Esophagus muscularis mucosa (tissue), 4 donors: ENCODE measurements at regions of chr2 and their contacts with region 1.

Region 1: DNA sequence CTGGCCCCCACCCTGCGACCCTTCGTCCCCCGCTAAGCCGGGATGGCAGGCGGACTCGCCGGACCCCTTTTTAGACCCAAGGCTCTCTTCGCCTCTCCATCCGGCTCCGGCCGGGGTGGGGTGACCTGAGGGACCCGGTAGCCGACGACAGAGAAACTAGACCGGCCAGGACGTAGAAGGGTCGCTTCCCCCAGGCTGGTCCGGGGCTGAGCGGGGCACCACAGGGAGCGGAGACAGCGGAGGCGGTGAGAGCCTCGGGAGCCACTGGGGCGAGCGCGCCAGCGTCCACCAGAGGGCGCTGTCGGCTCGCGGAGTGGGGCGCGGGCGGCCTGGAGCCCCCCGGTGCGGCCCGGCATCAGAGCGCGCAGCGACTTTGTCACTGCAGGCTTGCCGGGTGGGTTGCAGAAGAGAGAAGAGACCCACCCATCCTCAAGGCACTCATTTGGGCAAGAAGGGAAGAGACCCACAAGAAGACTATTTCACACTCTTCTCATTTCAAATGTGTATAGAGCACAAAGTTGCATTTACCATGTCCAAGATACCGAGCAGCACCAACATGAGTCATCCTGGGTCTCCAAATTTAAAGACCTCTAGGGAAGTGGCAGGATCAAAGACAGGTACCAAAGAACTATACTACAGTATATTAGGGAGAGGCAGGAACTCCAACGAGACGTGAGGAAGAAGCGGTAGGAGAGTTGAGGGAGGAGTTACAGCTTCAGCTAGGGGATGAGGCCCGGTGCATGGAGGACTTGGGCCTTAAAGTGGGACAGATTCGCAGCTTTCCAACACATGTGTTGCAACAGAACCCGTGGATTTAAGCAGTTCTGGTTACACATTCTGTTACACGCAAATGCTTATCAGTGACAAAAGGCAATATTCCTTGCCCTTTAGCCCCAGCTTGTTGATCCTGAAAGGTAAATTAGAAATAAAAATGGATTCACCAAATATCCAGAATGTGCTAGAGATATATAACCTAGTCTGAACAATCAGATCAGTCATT is 7.6 kb upstream of the PRKCE start:
- DNase-seq: no peak
- H3K4me3 ChIP-seq: peak overlapping the region; percentile 59 to 64 (median 62)
- H3K27ac ChIP-seq: peak overlapping the region in 2 of 4 donors; percentile 36 to 61
- H3K4me1 ChIP-seq: peaks cover 14 to 32% (median 30%) of the 10 kb centered on the region in 4 donors
- H3K27me3 ChIP-seq: peaks cover 0 to 12% (median 0%) of the 10 kb centered on the region in 4 donors
- CTCF ChIP-seq: peak in 2 of 3 experiments; percentile 98 to 100
- EP300 ChIP-seq: no peak
- POLR2A ChIP-seq: no peak

Region 2: DNA sequence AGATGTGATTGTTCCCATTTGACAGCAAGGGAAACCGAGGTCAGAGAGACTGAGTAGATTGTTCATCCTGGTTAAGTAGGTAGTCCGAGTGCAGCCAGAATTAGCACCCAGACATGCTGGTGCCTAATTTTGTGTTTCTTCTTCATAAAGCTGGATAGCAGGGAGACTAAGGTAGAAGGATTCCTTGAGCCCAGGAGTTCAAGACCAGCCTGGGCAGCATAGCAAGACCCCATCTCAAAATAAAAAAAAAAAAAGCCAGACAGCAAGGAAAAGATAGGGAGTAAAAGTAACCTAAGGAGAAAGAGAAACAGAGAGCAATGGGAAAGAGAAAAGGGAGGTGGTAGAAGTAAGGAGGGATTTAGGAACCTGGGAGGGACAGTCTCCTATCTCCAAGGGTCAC is 128.2 kb after region 1 on chr2:
- intact Hi-C with region 1: loop called (anchors 1 kb)
- DNase-seq: no peak
- H3K4me3 ChIP-seq: no peak overlapping the region
- H3K27ac ChIP-seq: peak overlapping the region; percentile 77 to 87 (median 81)
- H3K4me1 ChIP-seq: peaks cover 30 to 67% (median 39%) of the 10 kb centered on the region in 4 donors
- H3K27me3 ChIP-seq: no peaks in the 10 kb centered on the region
- CTCF ChIP-seq: no peak
- EP300 ChIP-seq: no peak
- POLR2A ChIP-seq: no peak

Region 3: DNA sequence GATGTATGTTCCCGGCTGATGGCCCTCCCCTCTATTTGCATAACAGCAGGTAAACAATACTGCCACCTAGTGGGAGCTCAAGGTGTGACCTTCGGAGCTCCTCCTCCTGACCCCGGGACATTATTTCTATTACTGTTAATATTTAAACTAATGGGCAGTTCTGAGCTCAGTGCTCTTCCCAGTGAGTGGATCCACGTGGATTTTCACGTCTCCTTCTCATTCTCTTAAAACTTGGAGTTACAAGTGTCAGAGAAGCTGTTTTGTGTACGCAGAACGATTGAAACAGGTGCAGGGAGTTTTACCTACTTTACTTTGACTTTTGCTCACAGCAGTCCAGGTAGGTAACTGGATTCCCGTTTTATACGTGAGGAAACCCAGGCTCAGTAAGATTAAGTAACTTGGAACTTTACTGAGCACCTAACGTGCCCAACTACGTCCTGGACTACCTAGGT is 134.9 kb after region 1 on chr2:
- intact Hi-C with region 1: loop called (anchors 2 kb)
- DNase-seq: no peak
- H3K4me3 ChIP-seq: no peak overlapping the region
- H3K27ac ChIP-seq: no peak overlapping the region
- H3K4me1 ChIP-seq: peaks cover 6 to 71% (median 49%) of the 10 kb centered on the region in 4 donors
- H3K27me3 ChIP-seq: no peaks in the 10 kb centered on the region
- CTCF ChIP-seq: peak; percentile 77 to 82 (median 79)
- EP300 ChIP-seq: no peak
- POLR2A ChIP-seq: no peak

Region 4: DNA sequence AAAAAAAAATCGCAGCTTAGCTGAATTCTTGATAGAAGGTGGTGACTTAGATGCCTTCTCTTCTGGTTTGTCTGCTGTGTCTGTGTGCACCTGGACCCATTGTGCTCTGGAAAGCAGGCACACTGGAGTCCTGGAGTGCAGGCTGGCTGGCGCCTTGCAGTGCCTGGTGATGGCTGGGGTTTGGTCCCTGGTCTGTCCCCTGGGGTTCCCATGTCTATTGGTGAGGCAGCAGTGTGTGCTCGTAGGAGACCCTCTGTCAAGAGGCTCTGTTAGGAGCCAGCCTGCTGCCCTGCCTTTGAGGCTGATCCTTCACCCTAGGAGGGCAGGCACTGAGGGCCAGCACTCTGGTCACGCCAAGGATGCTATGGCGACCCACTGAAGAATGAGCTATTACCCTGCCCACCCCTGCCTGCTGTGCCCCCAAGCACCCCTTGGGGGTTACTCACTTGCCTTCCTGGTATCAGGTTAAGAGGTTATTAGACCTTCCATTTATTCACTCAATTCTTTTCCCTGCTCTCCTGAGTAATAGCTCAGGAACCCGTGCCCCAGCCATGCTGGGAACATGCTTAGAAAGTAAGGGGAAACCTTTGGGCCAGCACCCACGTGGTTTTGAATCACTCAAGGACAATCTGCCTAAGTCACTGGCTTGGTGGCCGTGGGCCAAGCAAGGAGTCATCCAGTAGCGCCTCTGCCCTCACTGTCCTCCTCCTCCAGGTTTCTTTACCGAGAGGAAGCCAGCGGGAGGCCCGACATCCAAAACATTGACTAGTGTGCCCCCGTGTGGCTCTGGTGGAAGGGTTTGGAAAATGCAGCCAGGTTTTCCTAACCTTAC is 292.2 kb after region 1 on chr2:
- intact Hi-C with region 1: loop called (anchors 2 kb)
- DNase-seq: peak; percentile 98
- H3K4me3 ChIP-seq: no peak overlapping the region
- H3K27ac ChIP-seq: peak overlapping the region; percentile 68 to 75 (median 74)
- H3K4me1 ChIP-seq: peaks cover 15 to 39% (median 36%) of the 10 kb centered on the region in 4 donors
- H3K27me3 ChIP-seq: no peaks in the 10 kb centered on the region
- CTCF ChIP-seq: peak; percentile 77 to 89 (median 83)
- EP300 ChIP-seq: no peak
- POLR2A ChIP-seq: no peak

Region 5: DNA sequence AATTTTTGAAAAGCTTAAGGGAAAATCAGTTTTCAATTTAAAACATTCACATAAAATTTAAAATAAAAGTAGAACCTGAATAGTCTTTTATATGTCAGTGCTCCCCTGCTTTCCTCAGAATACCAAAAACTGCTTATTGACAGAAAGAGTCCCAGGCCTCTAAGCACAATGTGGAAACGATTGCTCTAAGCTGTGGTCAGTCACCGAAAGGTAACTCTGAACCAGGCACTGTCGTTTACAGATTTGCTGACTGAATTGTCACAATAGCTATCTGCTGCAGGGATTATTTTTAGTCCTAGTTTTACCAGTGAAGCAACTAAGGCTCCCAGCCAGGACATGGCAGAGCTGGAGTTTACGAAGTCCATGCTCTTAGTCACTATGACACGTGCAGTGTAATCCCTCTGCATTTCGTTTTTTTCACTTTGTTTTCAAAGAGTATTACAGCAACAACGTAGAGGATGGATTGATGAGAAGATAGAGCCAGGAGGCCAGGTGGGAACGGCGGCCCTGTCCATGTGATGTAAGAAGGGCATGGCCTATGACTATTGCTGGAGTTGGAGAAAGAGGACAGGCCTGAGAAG is 807.4 kb after region 1 on chr2:
- intact Hi-C with region 1: loop called (anchors 10 kb)
- DNase-seq: peak; percentile 89
- H3K4me3 ChIP-seq: no peak overlapping the region
- H3K27ac ChIP-seq: peak overlapping the region; percentile 41 to 59 (median 48)
- H3K4me1 ChIP-seq: peaks cover 0 to 18% (median 11%) of the 10 kb centered on the region in 4 donors
- H3K27me3 ChIP-seq: no peaks in the 10 kb centered on the region
- CTCF ChIP-seq: no peak
- EP300 ChIP-seq: no peak
- POLR2A ChIP-seq: no peak

Region 6: DNA sequence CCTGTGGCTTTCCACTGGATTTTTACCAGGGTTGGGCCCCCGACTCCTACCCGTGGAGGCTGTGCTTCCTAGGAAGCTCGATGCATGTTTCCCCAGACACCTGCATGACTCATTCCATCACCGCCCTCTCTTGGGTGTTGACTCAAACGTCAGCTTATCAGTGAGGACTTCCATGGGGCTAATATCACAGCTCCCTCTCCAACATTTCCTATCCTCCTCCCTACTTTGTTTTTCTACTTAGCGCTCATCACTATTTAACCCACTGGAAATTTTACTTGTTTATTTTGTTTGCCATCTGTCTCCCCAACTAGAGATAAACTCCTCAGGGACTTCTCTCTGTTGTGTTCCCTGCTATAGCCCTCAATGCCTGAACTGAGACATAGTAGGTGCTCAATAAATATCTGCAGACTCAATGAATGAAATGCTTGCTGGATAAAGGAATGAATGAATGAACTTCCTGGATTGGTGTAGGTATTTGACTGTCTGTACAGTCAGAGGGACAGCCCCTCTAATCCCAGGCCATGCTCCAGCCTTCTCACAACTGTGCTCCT is 1669.4 kb after region 1 on chr2:
- intact Hi-C with region 1: no loop called
- DNase-seq: no peak
- H3K4me3 ChIP-seq: no peak overlapping the region
- H3K27ac ChIP-seq: no peak overlapping the region
- H3K4me1 ChIP-seq: peaks cover 19 to 26% (median 23%) of the 10 kb centered on the region in 4 donors
- H3K27me3 ChIP-seq: no peaks in the 10 kb centered on the region
- CTCF ChIP-seq: no peak
- EP300 ChIP-seq: no peak
- POLR2A ChIP-seq: no peak